ENCODE measurements at regions of chr7 and their contacts with region 1.

Region 1: DNA sequence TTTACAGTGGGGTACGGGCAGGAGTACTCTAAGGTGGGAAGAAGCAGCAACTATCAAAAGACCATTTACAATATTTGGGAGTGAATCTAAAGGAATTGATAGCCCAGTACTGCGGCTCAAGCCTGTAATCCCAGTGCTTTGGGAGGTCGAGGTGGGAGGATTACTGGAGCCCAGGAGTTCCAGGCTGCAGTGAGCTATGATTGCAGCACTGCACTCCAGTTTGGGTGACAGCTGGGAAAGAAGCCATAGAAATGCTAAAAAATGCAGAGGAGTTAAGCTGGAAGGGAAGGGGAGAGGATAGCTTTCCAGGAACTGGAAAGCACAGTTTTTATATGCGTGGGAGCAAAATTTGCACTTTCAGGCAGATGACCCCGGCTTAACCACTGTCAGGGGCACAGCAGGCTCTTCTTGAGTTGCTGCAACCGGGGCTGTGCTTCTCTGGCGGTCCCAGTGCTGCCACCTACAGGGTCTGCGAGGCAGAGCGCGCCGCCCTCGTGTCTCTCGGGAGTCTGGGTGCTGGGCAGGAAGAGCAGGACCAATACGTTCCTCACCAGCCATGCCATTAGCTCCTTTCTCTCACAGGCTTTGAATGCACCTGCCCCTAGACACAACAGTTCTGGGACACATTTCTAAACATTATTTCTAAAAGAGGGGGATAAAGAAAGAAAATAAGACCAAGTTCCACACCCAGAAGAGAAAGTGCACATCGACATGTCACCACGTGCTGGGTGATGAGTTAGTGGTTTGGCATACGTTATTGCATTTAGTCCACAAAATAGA is 10.1 kb upstream of the BMPER start:
- DNase-seq: peak; percentile 65
- ATAC-seq: peak; percentile 70
- H3K4me3 ChIP-seq: no peak overlapping the region
- H3K4me3 Mint-ChIP-seq: no peak overlapping the region
- H3K27ac ChIP-seq: no peak overlapping the region
- H3K27ac Mint-ChIP-seq: no peak overlapping the region
- H3K4me1 ChIP-seq: peaks cover 0 to 2% of the 10 kb centered on the region in 2 donors
- H3K4me1 Mint-ChIP-seq: peaks cover 4% of the 10 kb centered on the region
- H3K27me3 ChIP-seq: peaks cover 0 to 13% (median 9%) of the 10 kb centered on the region in 4 experiments
- H3K27me3 Mint-ChIP-seq: peaks cover 54% of the 10 kb centered on the region
- CTCF ChIP-seq: peak; percentile 86

Region 2: GRCh38 chr7:33185786-33186185 is 709.4 kb before region 1 on chr7:
- CTCF ChIA-PET with region 1: interaction called, 39 read pairs
- POLR2A ChIA-PET with region 1: no interaction called
- intact Hi-C with region 1: loop called (anchors 1 kb)
- DNase-seq: peak; percentile 60
- ATAC-seq: no peak
- H3K4me3 ChIP-seq: no peak overlapping the region
- H3K4me3 Mint-ChIP-seq: no peak overlapping the region
- H3K27ac ChIP-seq: no peak overlapping the region
- H3K27ac Mint-ChIP-seq: no peak overlapping the region
- H3K4me1 ChIP-seq: peaks cover 3% of the 10 kb centered on the region in 2 donors
- H3K4me1 Mint-ChIP-seq: peaks cover 6% of the 10 kb centered on the region
- H3K27me3 ChIP-seq: no peaks in the 10 kb centered on the region
- H3K27me3 Mint-ChIP-seq: no peaks in the 10 kb centered on the region
- CTCF ChIP-seq: peak; percentile 76

Region 3: GRCh38 chr7:33243319-33243881 is 651.8 kb before region 1 on chr7:
- CTCF ChIA-PET with region 1: interaction called, 3 read pairs
- POLR2A ChIA-PET with region 1: no interaction called
- intact Hi-C with region 1: loop called (anchors 2 kb)
- DNase-seq: peak; percentile 3
- ATAC-seq: no peak
- H3K4me3 ChIP-seq: no peak overlapping the region
- H3K4me3 Mint-ChIP-seq: no peak overlapping the region
- H3K27ac ChIP-seq: no peak overlapping the region
- H3K27ac Mint-ChIP-seq: no peak overlapping the region
- H3K4me1 ChIP-seq: no peaks in the 10 kb centered on the region
- H3K4me1 Mint-ChIP-seq: no peaks in the 10 kb centered on the region
- H3K27me3 ChIP-seq: no peaks in the 10 kb centered on the region
- H3K27me3 Mint-ChIP-seq: no peaks in the 10 kb centered on the region
- CTCF ChIP-seq: peak; percentile 26

Region 4: GRCh38 chr7:33423646-33424020 is 471.6 kb before region 1 on chr7:
- CTCF ChIA-PET with region 1: interaction called, 4 read pairs
- POLR2A ChIA-PET with region 1: no interaction called
- intact Hi-C with region 1: loop called (anchors 10 kb)
- DNase-seq: peak; percentile 37
- ATAC-seq: peak; percentile 36
- H3K4me3 ChIP-seq: no peak overlapping the region
- H3K4me3 Mint-ChIP-seq: no peak overlapping the region
- H3K27ac ChIP-seq: no peak overlapping the region
- H3K27ac Mint-ChIP-seq: no peak overlapping the region
- H3K4me1 ChIP-seq: peaks cover 7 to 15% of the 10 kb centered on the region in 2 donors
- H3K4me1 Mint-ChIP-seq: peaks cover 19% of the 10 kb centered on the region
- H3K27me3 ChIP-seq: no peaks in the 10 kb centered on the region
- H3K27me3 Mint-ChIP-seq: no peaks in the 10 kb centered on the region
- CTCF ChIP-seq: peak; percentile 57

Region 5: GRCh38 chr7:33882040-33882837 is 13.0 kb before region 1 on chr7:
- CTCF ChIA-PET with region 1: interaction called, 27 read pairs
- POLR2A ChIA-PET with region 1: no interaction called
- intact Hi-C with region 1: no loop called
- DNase-seq: no peak
- ATAC-seq: no peak
- H3K4me3 ChIP-seq: no peak overlapping the region
- H3K4me3 Mint-ChIP-seq: no peak overlapping the region
- H3K27ac ChIP-seq: no peak overlapping the region
- H3K27ac Mint-ChIP-seq: no peak overlapping the region
- H3K4me1 ChIP-seq: no peaks in the 10 kb centered on the region
- H3K4me1 Mint-ChIP-seq: no peaks in the 10 kb centered on the region
- H3K27me3 ChIP-seq: no peaks in the 10 kb centered on the region
- H3K27me3 Mint-ChIP-seq: peaks cover 24% of the 10 kb centered on the region
- CTCF ChIP-seq: no peak

Region 6: GRCh38 chr7:33909318-33909717 is 14.1 kb after region 1 on chr7:
- CTCF ChIA-PET with region 1: interaction called, 17 read pairs
- POLR2A ChIA-PET with region 1: no interaction called
- intact Hi-C with region 1: no loop called
- DNase-seq: no peak
- ATAC-seq: no peak
- H3K4me3 ChIP-seq: no peak overlapping the region
- H3K4me3 Mint-ChIP-seq: no peak overlapping the region
- H3K27ac ChIP-seq: no peak overlapping the region
- H3K27ac Mint-ChIP-seq: no peak overlapping the region
- H3K4me1 ChIP-seq: peaks cover 3 to 10% of the 10 kb centered on the region in 2 donors
- H3K4me1 Mint-ChIP-seq: peaks cover 4% of the 10 kb centered on the region
- H3K27me3 ChIP-seq: peaks cover 0 to 24% (median 16%) of the 10 kb centered on the region in 4 experiments
- H3K27me3 Mint-ChIP-seq: peaks cover 45% of the 10 kb centered on the region
- CTCF ChIP-seq: no peak

Region 7: GRCh38 chr7:34184466-34184865 is 289.3 kb after region 1 on chr7:
- CTCF ChIA-PET with region 1: no interaction called
- POLR2A ChIA-PET with region 1: no interaction called
- intact Hi-C with region 1: no loop called
- DNase-seq: no peak
- ATAC-seq: no peak
- H3K4me3 ChIP-seq: no peak overlapping the region
- H3K4me3 Mint-ChIP-seq: no peak overlapping the region
- H3K27ac ChIP-seq: no peak overlapping the region
- H3K27ac Mint-ChIP-seq: no peak overlapping the region
- H3K4me1 ChIP-seq: no peaks in the 10 kb centered on the region
- H3K4me1 Mint-ChIP-seq: no peaks in the 10 kb centered on the region
- H3K27me3 ChIP-seq: no peaks in the 10 kb centered on the region
- H3K27me3 Mint-ChIP-seq: no peaks in the 10 kb centered on the region
- CTCF ChIP-seq: no peak

Measured in B cell (primary cell).